Calu3 (cell line): ENCODE measurements at regions of chr1 and their contacts with region 1.

Region 1: GRCh38 chr1:118659640-118660039 is 328.5 kb downstream of the TBX15 start:
- DNase-seq: no peak
- H3K4me3 Mint-ChIP-seq: no peak overlapping the region
- H3K27ac Mint-ChIP-seq: no peak overlapping the region
- H3K4me1 Mint-ChIP-seq: no peaks in the 10 kb centered on the region
- H3K27me3 Mint-ChIP-seq: no peaks in the 10 kb centered on the region
- CTCF ChIP-seq: no peak

Region 2: GRCh38 chr1:118716782-118717181 is 57.1 kb after region 1 on chr1:
- CTCF ChIA-PET with region 1: no interaction called
- intact Hi-C with region 1: loop called (anchors 10 kb)
- DNase-seq: no peak
- H3K4me3 Mint-ChIP-seq: no peak overlapping the region
- H3K27ac Mint-ChIP-seq: no peak overlapping the region
- H3K4me1 Mint-ChIP-seq: no peaks in the 10 kb centered on the region
- H3K27me3 Mint-ChIP-seq: no peaks in the 10 kb centered on the region
- CTCF ChIP-seq: no peak

Region 3: DNA sequence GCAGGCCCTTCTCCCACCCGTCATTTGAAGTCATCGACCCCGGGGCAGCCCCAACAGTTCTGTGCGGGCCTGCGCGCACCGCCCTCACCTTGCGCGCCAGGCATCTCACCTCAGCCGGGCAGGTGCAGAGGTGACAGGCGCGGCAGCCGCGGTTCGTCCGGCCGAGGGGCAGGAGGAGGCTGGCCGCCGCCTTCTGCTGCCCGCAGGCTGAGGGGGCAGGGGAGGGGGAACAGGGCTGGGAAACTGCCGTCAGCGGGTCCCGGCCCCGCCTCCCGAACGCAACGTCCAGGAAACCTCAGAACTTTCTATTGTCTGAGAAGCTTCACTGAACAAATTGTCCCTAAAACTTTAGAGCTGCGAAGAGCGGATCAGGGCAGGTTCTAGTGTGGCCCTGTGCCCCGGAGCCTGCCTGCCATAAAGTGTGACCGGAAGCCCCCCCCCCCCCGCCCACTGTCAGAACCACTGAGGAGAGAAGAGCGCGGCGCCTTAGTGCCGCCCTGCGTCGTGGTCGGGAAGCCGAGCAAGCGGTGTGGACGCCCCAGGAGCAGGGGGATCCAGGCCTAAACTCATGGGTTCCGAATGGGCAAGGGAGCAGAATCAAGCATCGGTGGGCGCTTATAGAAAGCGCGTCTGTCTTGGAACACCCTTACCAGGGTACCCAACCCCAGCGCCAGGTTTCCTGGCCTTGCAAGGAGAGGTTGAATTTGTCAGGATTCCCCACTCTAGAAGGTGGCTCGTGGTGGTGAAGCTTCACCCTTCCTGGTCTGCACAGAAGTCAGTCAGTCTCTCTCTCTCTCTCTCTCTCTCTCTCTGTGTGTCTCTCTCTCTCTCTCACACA is 341.8 kb after region 1 on chr1:
- CTCF ChIA-PET with region 1: no interaction called
- intact Hi-C with region 1: no loop called
- DNase-seq: peak; percentile 35
- H3K4me3 Mint-ChIP-seq: peak overlapping the region; percentile 68
- H3K27ac Mint-ChIP-seq: peak overlapping the region; percentile 96
- H3K4me1 Mint-ChIP-seq: peaks cover 14% of the 10 kb centered on the region
- H3K27me3 Mint-ChIP-seq: peaks cover 26% of the 10 kb centered on the region
- CTCF ChIP-seq: no peak